ENCODE measurements at regions of chr13 and their contacts with region 1.

Region 1: GRCh38 chr13:51825165-51825592 is 19.8 kb downstream of the TMEM272 start:
- DNase-seq: no peak
- ATAC-seq: peak; percentile 73

Region 2: DNA sequence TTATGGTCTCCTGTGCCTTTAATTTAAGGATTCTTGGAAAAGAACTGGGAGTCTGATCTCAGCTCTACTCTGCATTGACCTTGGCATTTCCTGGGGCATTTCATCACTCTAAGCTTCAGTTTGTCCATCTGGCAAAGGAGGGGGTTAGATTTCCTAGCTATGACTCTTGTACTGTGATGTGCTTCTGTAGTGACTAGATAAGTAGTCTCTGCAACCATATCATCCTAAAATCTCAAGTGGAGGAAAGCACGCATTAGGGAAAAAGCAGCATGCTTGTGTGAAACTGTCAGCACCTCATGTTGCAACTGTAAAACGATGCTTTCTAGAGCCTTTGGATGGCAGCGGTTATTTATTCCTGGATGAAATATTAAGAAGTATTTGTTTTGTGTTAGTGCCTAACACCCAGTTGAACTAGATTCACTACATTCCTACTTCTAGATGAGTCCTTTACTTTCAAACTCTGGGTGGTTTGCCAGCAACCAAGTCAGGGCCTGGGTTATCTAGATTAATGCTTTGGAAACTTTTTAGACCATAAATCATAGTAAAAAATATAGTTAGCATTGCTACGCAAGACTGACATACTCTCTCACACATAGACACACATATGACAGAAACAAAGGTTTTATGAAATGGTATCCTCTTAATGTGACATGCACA is 234.1 kb before region 1 on chr13:
- intact Hi-C with region 1: no loop called
- DNase-seq: no peak
- ATAC-seq: peak; percentile 94

Region 3: GRCh38 chr13:51856027-51856736 is 31.0 kb after region 1 on chr13:
- intact Hi-C with region 1: loop called (anchors 1 kb)
- DNase-seq: no peak
- ATAC-seq: no peak

Measured in sciatic nerve (tissue), 2 donors.